ENCODE measurements at regions of chr5 and their contacts with region 1.

Region 1: GRCh38 chr5:181223058-181223728 is at the start of gene TRIM41:
- DNase-seq: peak; percentile 88

Region 2: GRCh38 chr5:180742727-180743126 is 480.5 kb before region 1 on chr5:
- CTCF ChIA-PET with region 1: no interaction called
- POLR2A ChIA-PET with region 1: no interaction called
- DNase-seq: no peak

Region 3: GRCh38 chr5:181207214-181208107 is 15.7 kb before region 1 on chr5:
- CTCF ChIA-PET with region 1: interaction called, 4 read pairs
- POLR2A ChIA-PET with region 1: interaction called, 11 read pairs
- DNase-seq: peak; percentile 67

Region 4: DNA sequence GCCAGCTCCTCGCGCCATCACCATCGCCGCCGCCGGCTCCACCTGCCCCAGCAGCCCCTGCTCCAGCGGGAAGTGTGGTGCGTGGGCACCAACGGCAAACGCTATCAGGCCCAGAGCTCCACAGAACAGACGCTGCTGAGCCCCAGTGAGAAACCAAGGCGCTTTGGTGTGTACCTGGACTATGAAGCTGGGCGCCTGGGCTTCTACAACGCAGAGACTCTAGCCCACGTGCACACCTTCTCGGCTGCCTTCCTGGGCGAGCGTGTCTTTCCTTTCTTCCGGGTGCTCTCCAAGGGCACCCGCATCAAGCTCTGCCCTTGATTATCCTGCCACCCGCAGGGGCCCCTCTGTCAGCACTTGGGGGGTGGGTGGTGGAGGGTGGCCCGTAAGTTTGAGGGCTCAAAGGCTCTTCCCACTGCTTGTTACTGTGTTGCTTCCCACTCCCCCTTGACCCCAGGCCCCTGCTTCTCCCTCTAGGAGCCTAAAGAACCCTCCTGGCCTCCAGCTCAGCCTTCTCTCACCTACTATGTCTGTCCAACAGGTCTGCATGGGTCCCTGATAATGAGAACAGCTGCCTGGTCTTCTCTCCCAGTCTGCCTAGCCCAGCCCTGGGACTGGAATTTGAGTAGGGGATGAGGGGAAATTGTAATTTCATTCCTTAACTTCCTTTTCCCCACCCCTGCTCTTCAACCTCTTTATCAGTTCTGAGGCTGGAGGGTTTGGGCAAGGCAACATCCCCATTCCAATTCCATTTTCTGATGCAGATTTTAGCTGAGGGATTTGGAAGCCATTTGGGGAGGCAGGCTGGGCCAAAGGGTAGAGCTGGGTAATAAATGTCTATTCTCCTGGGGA is 11.5 kb after region 1 on chr5:
- CTCF ChIA-PET with region 1: no interaction called
- POLR2A ChIA-PET with region 1: interaction called, 25 read pairs
- DNase-seq: no peak

Region 5: DNA sequence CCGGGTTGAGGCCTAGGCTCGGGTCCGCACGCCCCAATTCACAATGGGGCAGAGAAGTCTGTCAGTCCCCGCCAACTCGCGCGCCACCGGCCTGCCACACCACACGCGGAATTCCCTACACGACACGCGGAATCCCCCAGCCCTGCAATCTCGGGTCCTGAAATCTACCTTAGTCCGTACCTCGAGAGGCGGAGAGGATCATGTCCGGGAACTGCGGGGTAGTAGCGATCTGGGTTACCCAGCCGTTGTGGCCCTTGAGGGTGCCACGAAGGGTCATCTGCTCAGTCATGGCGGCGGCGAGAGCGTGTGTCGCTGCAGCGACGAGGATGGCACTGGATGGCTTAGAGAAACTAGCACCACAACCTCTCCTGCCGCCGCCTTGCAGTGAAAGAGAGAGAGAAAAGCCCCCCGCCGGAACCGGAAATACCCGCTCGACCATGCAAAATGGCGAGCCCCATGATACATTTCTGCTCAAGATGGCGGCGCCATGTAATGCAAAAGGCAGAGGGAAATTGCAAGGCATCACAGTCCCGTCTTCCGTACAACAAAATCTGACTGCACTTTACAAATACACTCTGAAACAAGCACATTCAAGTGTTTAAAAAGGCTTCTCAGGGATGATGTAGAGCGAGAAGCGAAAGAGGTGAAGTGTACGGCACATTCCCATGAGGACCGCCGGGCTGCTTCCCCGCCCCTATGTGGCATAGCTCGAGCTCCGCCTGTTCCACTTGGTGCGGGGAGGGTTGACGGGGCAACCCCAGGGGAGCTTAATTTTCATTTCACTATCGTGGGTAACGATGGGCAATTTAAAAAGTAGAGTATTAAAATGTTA is 20.5 kb after region 1 on chr5 and contains the start of gene RACK1:
- CTCF ChIA-PET with region 1: no interaction called
- POLR2A ChIA-PET with region 1: interaction called, 43 read pairs
- DNase-seq: peak; percentile 87

Region 6: DNA sequence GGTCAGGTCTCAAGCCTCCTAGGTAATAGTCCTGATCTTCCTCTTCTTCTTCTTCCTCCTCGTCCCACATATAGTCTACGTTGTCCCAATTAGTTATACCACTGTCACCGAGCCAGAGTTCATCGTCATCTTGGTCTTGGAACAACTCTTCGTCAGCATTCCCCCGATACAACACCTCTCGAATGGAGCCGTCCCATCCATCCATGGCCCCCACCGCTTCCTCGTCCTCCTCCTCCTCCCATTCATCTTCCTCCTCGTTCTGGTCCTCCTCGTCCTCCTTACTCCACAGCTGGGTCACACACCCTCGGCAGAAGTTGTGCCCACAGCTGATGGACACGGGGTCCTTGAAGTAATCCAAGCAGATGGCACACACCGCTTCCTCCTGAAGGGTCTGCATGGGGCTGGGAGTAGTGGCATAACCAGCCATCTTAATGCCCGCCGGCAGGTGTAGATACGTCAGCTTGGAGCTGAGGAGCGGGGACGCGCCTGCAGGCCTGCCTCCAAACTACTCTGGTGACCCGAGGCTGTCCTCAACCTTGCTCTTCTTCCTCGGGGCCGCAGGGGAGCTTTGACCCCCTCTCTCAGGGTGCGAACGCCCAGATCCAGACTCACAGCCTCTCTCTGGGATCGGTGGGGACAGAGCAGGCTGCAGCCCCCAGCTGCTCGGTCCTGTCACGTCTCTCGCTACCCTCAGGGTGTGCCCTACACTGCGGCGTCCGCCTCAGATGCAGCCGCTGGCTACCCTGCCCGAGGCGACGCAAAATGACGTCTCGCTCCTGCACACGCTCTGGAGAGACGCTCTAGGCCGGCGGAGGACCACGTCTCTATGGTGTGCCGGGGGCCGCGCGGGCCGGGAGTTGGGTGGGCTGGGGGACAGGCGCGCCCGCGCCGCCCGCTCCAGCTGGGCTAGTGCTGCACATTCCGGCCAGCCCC is 37.5 kb after region 1 on chr5 and contains the start of gene TRIM52:
- CTCF ChIA-PET with region 1: interaction called, 5 read pairs
- POLR2A ChIA-PET with region 1: interaction called, 19 read pairs
- DNase-seq: peak; percentile 89

Measured in HEK293T (cell line).